PC-9 (cell line): ENCODE measurements at regions of chr10 and their contacts with region 1.

Region 1: GRCh38 chr10:119872860-119873681 is 428 bp upstream of the MCMBP start:
- DNase-seq: peak; percentile 35 to 73
- H3K4me3 ChIP-seq: peak overlapping the region; percentile 92
- H3K27ac ChIP-seq: no peak overlapping the region
- H3K4me1 ChIP-seq: peaks cover 17% of the 10 kb centered on the region
- H3K27me3 ChIP-seq: no peaks in the 10 kb centered on the region
- CTCF ChIP-seq: no peak

Region 2: DNA sequence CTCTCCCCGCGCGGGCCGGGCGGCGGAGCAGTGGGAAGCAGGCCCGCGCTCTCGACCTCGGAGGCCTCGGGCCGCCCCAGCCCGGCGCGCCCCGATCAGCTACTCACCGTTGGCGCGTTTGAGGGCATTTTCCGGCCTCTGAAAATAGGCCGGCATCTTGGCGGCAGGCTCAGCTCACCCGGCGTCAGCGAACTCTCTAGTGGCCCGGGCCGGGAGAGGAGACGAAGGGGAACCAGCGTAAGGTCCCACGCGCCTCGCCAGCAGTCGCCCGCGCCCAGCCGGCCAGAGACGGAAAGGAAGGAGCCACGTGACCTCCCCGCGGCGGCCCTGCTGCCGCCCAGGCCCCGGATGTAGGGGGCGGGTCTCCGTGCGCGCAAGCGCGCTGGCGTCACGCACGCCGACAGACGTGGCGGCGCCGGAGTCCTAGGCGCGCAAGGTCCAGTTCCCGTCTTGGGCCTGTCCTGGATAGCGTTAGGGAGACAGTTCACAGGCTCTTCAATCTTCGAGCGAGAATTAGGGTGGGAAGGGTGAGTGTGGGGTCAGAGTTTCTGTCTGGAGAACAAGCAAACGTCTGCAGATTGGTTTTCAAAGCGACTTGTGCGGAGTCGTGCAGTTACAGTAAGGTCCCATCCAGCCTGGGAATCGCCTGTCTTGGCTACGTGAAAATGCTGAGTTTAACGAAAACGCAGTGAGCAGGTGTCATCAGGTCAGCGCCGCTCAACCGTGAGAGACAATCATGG is 792.4 kb before region 1 on chr10 and contains the start of gene EIF3A:
- CTCF ChIA-PET with region 1: no interaction called
- POLR2A ChIA-PET with region 1: interaction called, 13 read pairs
- intact Hi-C with region 1: no loop called
- DNase-seq: peak; percentile 69 to 87
- H3K4me3 ChIP-seq: peak within 1 kb of the TSS; percentile 84
- H3K27ac ChIP-seq: peak within 1 kb of the TSS; percentile 78
- H3K4me1 ChIP-seq: peaks cover 10% of the 10 kb centered on the region
- H3K27me3 ChIP-seq: no peaks in the 10 kb centered on the region
- CTCF ChIP-seq: no peak
- total RNA-seq, gene EIF3A: 85.5 and 102 TPM in 2 replicates

Region 3: GRCh38 chr10:119725828-119726675 is 147.0 kb before region 1 on chr10 and contains the start of gene INPP5F:
- CTCF ChIA-PET with region 1: interaction called, 15 read pairs
- POLR2A ChIA-PET with region 1: no interaction called
- intact Hi-C with region 1: no loop called
- DNase-seq: peak; percentile 79 to 97
- H3K4me3 ChIP-seq: peak within 1 kb of the TSS; percentile 70
- H3K27ac ChIP-seq: peak within 1 kb of the TSS; percentile 62
- H3K4me1 ChIP-seq: peaks cover 20% of the 10 kb centered on the region
- H3K27me3 ChIP-seq: no peaks in the 10 kb centered on the region
- CTCF ChIP-seq: no peak
- total RNA-seq, gene INPP5F: 11.4 and 12.4 TPM in 2 replicates

Region 4: DNA sequence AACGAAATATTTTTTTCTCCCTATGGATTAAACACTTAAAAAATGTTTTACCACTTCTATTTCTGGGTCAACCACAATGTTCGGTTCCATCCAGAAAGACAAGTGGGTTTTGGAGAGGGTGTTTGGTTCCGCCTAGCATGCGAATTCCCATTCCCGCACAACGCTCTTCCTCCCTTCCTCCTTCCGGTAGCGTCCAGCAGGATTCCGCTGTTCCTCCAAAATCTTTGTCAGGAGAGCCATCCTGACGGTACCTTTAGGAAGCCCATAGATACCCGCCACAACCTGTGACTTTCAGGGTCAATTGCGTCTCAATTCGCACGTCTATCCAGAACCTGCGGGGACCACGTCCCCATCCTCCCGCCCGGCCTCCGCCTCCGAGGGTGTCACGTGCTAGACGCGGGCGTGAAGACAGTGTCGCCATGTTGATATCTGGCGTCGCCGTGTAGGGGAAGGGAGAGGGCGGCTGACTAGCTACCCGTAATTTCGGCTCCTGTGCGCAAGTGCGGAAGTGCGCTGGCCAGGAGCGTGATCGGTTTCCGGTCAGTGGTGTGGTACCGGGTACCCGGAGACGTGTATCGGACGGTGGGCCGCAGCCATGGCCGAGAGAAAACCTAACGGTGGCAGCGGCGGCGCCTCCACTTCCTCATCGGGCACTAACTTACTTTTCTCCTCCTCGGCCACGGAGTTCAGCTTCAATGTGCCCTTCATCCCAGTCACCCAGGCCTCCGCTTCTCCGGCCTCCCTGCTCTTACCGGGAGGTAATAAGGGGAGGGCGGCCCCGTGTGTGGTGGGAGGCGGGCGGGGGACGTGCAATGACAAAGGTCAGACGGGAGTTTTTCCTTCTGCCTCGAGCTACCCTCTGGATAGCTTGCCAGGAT is 19.4 kb after region 1 on chr10 and contains the start of gene SEC23IP:
- CTCF ChIA-PET with region 1: interaction called, 3 read pairs
- POLR2A ChIA-PET with region 1: interaction called, 50 read pairs
- intact Hi-C with region 1: loop called (anchors 1 kb)
- DNase-seq: peak; percentile 85 to 86
- H3K4me3 ChIP-seq: peak within 1 kb of the TSS; percentile 91
- H3K27ac ChIP-seq: peak within 1 kb of the TSS; percentile 49; the same call in 1 of the 2 replicates
- H3K4me1 ChIP-seq: peaks cover 12% of the 10 kb centered on the region; the same call in 1 of the 2 replicates
- H3K27me3 ChIP-seq: no peaks in the 10 kb centered on the region
- CTCF ChIP-seq: no peak
- total RNA-seq, gene SEC23IP: 19.9 and 33.2 TPM in 2 replicates